ENCODE measurements at regions of chr15 and their contacts with region 1.

Region 1: GRCh38 chr15:56869573-56869972 is 48.9 kb upstream of the TCF12 start:
- DNase-seq: peak; percentile 45
- ATAC-seq: no peak
- H3K4me3 Mint-ChIP-seq: no peak overlapping the region
- H3K27ac Mint-ChIP-seq: no peak overlapping the region
- H3K4me1 Mint-ChIP-seq: peaks cover 13% of the 10 kb centered on the region
- H3K27me3 Mint-ChIP-seq: no peaks in the 10 kb centered on the region
- CTCF ChIP-seq: peak; percentile 78

Region 2: DNA sequence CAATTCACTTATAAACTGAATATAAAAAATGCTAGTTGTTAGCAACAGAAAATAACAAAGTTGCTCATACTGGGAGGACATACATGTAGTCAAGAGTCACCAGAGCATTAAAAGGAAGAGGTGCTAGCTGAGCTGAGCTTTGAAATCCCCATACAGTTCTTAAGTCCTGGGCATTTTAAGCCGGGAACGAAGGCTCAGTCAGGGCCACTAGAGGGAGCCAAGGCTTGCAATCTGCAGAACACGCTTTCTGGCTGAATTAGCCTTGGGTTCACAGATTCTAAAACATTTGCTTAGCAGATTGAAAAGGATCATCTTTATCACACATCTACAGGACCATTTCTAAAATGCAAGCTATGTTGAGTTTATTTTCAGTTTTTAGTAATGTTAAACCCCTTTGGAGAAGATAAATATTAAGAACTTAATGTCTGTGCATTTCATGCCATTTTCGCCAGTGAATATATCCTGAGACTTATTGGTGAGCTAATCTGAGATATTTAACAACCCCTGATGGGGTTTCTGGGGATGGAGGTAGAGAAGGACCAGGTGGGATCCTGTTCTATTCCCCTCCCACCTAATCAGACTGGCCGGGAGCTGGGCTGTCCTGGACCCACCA is 378.4 kb before region 1 on chr15:
- CTCF ChIA-PET with region 1: interaction called, 24 read pairs
- POLR2A ChIA-PET with region 1: no interaction called
- DNase-seq: peak; percentile 70
- ATAC-seq: peak; percentile 89
- H3K4me3 Mint-ChIP-seq: no peak overlapping the region
- H3K27ac Mint-ChIP-seq: no peak overlapping the region
- H3K4me1 Mint-ChIP-seq: no peaks in the 10 kb centered on the region
- H3K27me3 Mint-ChIP-seq: no peaks in the 10 kb centered on the region; the same call in 1 of the 2 replicates
- CTCF ChIP-seq: peak; percentile 65

Region 3: DNA sequence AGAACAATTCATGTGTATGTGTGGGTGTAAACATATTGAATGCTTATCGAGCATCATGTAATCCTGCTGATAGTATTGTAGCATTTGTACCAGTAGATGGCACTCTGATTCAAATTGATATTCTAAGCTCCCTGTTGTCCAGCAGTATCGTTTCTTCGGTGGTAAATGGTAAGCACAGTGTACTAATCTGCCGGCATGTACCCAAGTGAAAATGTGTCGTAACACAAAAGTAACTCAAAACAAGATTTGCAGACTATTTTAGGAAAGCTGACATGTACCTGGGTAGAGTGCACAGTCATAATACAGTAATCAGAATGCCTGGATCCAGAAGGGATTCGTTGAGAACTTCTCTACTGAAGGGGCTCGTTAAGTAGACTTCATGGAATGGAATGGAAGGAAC is 372.9 kb before region 1 on chr15:
- CTCF ChIA-PET with region 1: interaction called, 24 read pairs
- POLR2A ChIA-PET with region 1: no interaction called
- DNase-seq: no peak
- ATAC-seq: peak; percentile 90
- H3K4me3 Mint-ChIP-seq: no peak overlapping the region
- H3K27ac Mint-ChIP-seq: no peak overlapping the region
- H3K4me1 Mint-ChIP-seq: no peaks in the 10 kb centered on the region
- H3K27me3 Mint-ChIP-seq: no peaks in the 10 kb centered on the region; the same call in 1 of the 2 replicates
- CTCF ChIP-seq: peak; percentile 32

Measured in WTC11 (cell line).